Testis (tissue), 5 donors: ENCODE measurements at regions of chr4 and their contacts with region 1.

Region 1: DNA sequence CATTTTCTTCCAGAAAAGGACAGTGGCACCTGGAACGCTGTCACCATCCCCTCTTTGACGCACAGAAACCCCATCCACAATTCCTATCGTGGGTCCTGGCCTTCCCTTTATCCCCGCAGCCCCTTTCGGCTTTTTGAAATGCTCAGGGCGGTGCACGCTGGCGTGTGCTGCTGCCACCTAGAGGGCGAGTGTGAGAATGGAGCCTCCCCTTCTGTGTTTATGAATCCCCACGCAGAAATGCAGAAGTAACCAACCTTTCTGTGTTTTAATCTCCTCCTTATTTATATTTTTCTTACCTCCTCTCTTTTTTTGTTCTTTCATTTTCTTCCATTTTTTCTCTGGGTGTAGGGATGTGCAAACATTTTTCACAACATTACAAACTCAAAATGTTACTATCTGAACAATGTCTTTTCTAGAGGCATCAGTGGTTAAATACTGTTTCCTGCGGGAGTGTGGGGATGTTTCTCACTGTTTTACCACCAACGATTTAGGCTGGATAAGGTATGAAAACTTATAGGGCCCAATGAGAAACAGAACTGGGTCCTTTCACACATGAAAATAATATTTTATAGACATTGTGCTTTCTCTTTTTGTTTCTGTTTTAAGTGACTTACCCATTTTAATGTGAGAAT is 50.0 kb downstream of the TMA16 start:
- DNase-seq: peak; percentile 70
- H3K4me3 ChIP-seq: no peak overlapping the region
- H3K27ac ChIP-seq: no peak overlapping the region
- H3K4me1 ChIP-seq: peaks cover 3% of the 10 kb centered on the region
- H3K27me3 ChIP-seq: no peaks in the 10 kb centered on the region
- CTCF ChIP-seq: peak; percentile 52 to 87 (median 67)
- POLR2A ChIP-seq: no peak

Region 2: GRCh38 chr4:163494360-163495162 is 50.0 kb before region 1 on chr4 and contains the start of gene TMA16:
- intact Hi-C with region 1: loop called (anchors 10 kb)
- DNase-seq: peak; percentile 91
- H3K4me3 ChIP-seq: peak within 1 kb of the TSS; percentile 60 to 84
- H3K27ac ChIP-seq: peak within 1 kb of the TSS; percentile 78 to 83
- H3K4me1 ChIP-seq: peaks cover 3% of the 10 kb centered on the region
- H3K27me3 ChIP-seq: no peaks in the 10 kb centered on the region
- CTCF ChIP-seq: no peak
- POLR2A ChIP-seq: no peak
- total RNA-seq, gene TMA16: 33.0 to 34.1 TPM